Psoas muscle (tissue), 8 donors: ENCODE measurements at regions of chr2 and their contacts with region 1.

Region 1: GRCh38 chr2:190062053-190062452 is 476 bp downstream of the MSTN start:
- DNase-seq: no peak
- ATAC-seq: peak in 3 of 4 donors; percentile 45 to 73 (median 62)
- H3K4me3 ChIP-seq: peak overlapping the region; percentile 74
- H3K27ac ChIP-seq: peak overlapping the region; percentile 75
- H3K4me1 ChIP-seq: peaks cover 5% of the 10 kb centered on the region
- H3K27me3 ChIP-seq: no peaks in the 10 kb centered on the region
- CTCF ChIP-seq: no peak

Region 2: GRCh38 chr2:189683363-189683762 is 378.7 kb before region 1 on chr2:
- intact Hi-C with region 1: loop called in 1 of 2 experiments (anchors 5 kb)
- DNase-seq: no peak
- ATAC-seq: no peak
- H3K4me3 ChIP-seq: no peak overlapping the region
- H3K27ac ChIP-seq: no peak overlapping the region
- H3K4me1 ChIP-seq: peaks cover 3% of the 10 kb centered on the region
- H3K27me3 ChIP-seq: no peaks in the 10 kb centered on the region
- CTCF ChIP-seq: no peak

Region 3: DNA sequence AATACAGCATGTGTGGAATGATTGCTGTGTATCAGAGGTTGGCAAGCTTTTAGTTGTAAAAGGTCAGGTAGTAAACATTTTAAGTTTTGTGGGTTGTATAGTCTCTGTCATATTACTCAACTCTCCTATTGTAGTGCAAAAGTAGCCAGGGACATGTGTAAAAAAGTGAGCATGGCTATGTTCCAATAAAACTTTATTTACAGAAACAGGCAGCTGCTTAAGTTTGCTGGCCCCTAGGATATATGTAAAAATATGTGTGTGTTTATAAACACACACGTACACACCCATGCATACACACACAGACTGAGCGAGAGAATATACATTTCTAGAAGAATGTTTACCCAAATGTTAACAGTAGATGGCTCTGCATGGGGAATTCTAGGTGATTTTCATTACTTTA is 32.5 kb before region 1 on chr2:
- intact Hi-C with region 1: loop called in 1 of 2 experiments (anchors 5 kb)
- DNase-seq: no peak
- ATAC-seq: no peak
- H3K4me3 ChIP-seq: no peak overlapping the region
- H3K27ac ChIP-seq: no peak overlapping the region
- H3K4me1 ChIP-seq: peaks cover 9% of the 10 kb centered on the region
- H3K27me3 ChIP-seq: no peaks in the 10 kb centered on the region
- CTCF ChIP-seq: no peak